PC-9 (cell line): ENCODE measurements at regions of chr2 and their contacts with region 1.

Region 1: DNA sequence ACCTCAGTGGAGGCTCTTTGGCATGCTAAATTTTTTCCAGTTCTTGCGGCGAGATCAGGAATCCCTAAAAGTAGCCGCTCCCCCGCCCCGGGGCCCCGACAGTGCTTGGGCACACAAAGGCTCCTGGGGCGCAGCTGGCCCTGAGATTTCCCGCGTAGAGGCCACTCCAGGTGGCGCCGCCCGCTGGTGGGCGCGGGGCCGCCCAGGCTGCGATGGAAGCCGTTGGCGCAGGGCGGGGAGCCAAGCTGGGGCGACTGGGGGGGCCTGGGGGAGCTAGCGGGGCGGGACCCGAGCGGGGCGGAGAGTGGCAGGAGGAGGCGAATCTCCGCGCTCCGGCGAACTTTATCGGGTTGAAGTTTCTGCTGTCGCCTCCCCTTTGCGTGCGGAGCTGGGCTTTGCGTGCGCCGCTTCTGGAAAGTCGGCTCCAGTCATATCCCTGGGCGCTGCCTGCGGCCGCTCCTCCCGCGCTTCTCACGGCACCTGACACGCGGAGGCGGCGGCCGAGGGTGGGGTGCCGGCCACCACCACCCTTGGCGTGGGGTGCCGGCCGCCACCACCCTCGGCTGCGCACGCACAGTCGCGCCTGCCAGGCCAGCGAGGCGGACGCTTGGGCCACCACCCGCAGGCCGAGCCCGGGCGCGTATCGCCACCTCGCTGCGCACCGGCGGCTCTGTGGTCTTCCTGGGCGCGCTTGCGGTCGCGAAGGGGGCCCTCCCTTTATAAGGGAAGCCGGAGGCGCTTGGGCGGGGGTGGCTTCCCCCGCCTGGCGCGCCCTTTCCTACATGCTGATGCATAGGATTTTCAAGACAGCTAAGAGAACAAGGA is 867 bp upstream of the CYP1B1 start:
- DNase-seq: peak; percentile 94
- H3K4me3 ChIP-seq: peak overlapping the region; percentile 69
- H3K27ac ChIP-seq: peak overlapping the region; percentile 98
- H3K4me1 ChIP-seq: peaks cover 45% of the 10 kb centered on the region
- H3K27me3 ChIP-seq: no peaks in the 10 kb centered on the region
- CTCF ChIP-seq: peak; percentile 77

Region 2: DNA sequence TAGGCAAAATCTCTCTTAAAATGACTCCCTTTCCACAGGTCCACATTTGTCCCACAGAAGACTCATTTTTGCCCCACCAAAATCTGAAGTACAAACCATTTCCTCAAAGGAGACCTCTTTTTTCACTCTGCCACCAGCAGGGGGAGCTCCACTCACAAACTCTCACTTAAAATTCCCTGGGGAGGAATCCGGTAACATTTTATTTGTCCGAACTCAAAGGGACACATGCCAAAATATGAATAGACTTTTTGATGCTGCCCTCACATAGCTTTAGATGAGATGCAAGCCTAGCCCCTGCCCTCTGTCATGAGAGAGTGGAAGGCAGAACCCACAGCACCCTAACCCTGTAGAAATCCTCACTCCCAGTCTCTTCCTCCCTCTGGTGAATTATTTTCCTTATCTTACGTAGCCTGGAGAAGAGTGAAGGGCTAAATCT is 94.7 kb before region 1 on chr2:
- CTCF ChIA-PET with region 1: interaction called, 4 read pairs
- POLR2A ChIA-PET with region 1: no interaction called
- intact Hi-C with region 1: loop called (anchors 2 kb)
- DNase-seq: peak; percentile 48 to 61
- H3K4me3 ChIP-seq: no peak overlapping the region
- H3K27ac ChIP-seq: no peak overlapping the region
- H3K4me1 ChIP-seq: peaks cover 12% of the 10 kb centered on the region
- H3K27me3 ChIP-seq: no peaks in the 10 kb centered on the region
- CTCF ChIP-seq: peak; percentile 96

Region 3: DNA sequence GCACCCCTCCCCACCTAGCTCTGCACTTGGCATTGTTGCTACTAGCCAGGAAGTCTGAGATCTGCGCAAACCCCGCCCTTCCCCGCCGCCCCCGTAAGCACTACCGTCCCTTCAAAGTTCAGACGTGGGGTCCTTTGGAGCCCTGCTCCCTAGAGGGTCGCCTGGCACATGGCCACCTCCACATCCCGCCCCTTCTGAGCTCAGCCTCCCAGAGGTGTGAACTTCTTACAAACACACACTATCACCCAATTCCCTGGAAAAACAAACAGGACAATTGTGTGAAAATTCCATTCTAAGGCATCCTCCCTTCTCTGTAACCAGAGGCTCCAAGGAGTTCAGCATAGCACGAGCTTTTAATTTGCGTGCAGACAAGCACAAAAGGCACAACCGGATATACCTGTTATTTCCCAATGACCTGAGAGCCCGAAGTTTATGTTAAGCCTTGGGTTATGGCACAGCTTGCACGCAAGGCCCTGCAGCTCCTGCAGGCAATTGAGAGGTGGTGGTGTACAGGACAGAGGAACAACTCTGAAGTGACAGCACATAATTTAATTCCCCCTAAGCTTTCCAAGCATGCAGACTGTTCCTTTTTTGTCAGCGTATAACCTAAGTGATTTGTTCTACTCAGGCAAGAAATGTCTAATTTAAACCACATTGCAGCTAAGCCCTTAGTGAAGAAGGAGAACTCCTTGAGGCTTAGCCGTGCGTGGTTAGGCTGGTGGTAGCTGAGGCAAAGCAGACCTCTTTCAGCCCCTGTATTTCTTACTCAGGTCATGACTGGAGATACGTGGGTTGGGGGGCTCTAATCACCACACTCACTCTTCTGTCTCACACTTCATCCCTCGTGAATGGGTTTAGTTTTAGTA is 19.4 kb after region 1 on chr2:
- CTCF ChIA-PET with region 1: interaction called, 15 read pairs
- POLR2A ChIA-PET with region 1: interaction called, 19 read pairs
- intact Hi-C with region 1: loop called (anchors 1 kb)
- DNase-seq: peak; percentile 77 to 100
- H3K4me3 ChIP-seq: peak overlapping the region; percentile 24; the same call in 1 of the 2 replicates
- H3K27ac ChIP-seq: peak overlapping the region; percentile 97
- H3K4me1 ChIP-seq: peaks cover 88% of the 10 kb centered on the region
- H3K27me3 ChIP-seq: no peaks in the 10 kb centered on the region
- CTCF ChIP-seq: no peak; the same call in 1 of the 2 replicates

Region 4: DNA sequence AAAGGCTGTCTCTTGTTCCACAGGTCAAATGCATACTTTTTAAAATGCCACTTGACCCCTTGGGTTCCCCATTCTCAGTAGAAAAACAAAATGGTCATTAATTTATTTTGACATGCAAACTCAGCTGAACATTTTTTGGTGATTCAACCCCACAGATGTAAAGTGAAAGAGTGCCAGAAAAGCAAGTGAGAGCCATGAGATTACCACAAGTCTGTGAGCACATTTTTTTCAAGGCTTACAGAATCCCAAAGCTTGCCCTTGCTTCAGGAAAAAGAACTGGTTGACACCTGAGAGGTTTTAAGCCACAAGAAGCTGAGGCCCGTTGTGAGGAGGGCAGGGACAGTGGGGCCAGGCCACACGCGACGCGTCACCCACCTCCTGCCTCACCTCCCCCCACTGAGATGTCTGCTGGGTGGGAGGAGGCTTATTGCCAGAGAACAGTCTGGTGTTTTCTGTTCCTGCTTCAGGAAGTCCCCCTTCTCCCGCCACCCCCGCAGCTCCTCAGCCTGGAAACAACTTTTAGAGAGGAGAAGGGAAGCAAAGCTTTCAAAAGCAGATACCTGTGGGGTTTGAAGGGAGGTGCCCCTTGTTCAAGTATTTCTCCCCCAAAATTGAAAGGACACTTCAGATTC is 69.6 kb after region 1 on chr2:
- CTCF ChIA-PET with region 1: interaction called, 5 read pairs
- POLR2A ChIA-PET with region 1: interaction called, 4 read pairs
- intact Hi-C with region 1: loop called (anchors 1 kb)
- DNase-seq: peak; percentile 71 to 91
- H3K4me3 ChIP-seq: peak overlapping the region; percentile 43; the same call in 1 of the 2 replicates
- H3K27ac ChIP-seq: peak overlapping the region; percentile 96
- H3K4me1 ChIP-seq: peaks cover 59% of the 10 kb centered on the region
- H3K27me3 ChIP-seq: no peaks in the 10 kb centered on the region
- CTCF ChIP-seq: no peak